CD4-positive, alpha-beta T cell (primary cell): ENCODE measurements at regions of chrX and their contacts with region 1.

Region 1: GRCh38 chrX:132219343-132219768 is at the start of gene RAP2C:
- DNase-seq: peak in 13 of 14 experiments; percentile 21 to 81 (median 42)
- ATAC-seq: no peak
- H3K4me3 ChIP-seq: peak within 1 kb of the TSS; percentile 85
- H3K4me3 Mint-ChIP-seq: peak within 1 kb of the TSS; percentile 93
- H3K27ac ChIP-seq: peak within 1 kb of the TSS; percentile 88 to 89
- H3K27ac Mint-ChIP-seq: peak within 1 kb of the TSS; percentile 100
- H3K4me1 ChIP-seq: peaks cover 8% of the 10 kb centered on the region
- H3K4me1 Mint-ChIP-seq: peaks cover 40% of the 10 kb centered on the region
- H3K27me3 ChIP-seq: no peaks in the 10 kb centered on the region
- H3K27me3 Mint-ChIP-seq: no peaks in the 10 kb centered on the region
- CTCF ChIP-seq: peak; percentile 54
- total RNA-seq, gene RAP2C: 51.9 to 52.0 TPM

Region 2: DNA sequence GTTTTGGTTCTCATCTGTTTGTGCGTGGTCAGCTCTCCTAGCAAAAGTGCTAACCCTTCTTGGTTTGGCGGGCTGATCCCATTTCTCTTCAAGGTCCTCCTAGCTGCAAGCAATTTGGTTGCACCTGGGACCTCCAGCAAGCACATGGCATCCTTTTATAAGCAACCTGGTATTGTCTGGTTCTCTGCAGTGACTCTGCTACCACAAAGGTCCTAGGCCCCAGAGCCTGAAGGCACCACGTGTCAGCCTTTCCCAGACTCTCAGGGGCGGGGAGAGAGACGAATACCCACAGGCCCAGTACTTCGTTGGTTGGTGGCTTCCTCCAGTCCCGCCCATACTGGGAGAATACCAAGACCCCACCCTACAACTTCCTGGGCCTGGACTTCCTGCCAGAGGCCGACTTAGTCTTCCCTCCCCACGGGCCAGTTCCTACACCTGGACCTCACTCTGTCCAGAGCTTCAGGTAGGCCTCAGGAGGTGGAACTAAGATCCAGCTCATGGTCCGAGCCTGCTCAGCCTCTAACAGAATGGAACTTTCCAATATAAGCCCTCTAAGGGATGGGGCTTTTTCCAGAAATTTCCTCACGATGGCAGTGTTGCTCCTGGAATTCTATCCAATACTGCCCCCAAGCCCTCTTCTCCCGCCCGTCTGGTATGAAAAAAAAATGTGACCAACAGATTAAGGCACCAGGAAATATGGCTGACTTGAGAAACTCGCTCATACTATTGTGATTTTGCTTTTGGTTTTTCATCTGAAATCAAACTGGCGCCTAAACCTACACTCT is 388.8 kb before region 1 on chrX:
- CTCF ChIA-PET with region 1: no interaction called
- POLR2A ChIA-PET with region 1: no interaction called
- intact Hi-C with region 1: loop called in 1 of 2 experiments (anchors 5 kb)
- DNase-seq: peak in 10 of 14 experiments; percentile 8 to 80 (median 36)
- ATAC-seq: peak; percentile 62
- H3K4me3 ChIP-seq: peak overlapping the region; percentile 37
- H3K4me3 Mint-ChIP-seq: peak overlapping the region; percentile 82
- H3K27ac ChIP-seq: peak overlapping the region in 1 of 2 donors; percentile 58
- H3K27ac Mint-ChIP-seq: peak overlapping the region; percentile 86
- H3K4me1 ChIP-seq: peaks cover 19% of the 10 kb centered on the region
- H3K4me1 Mint-ChIP-seq: peaks cover 33% of the 10 kb centered on the region
- H3K27me3 ChIP-seq: no peaks in the 10 kb centered on the region
- H3K27me3 Mint-ChIP-seq: no peaks in the 10 kb centered on the region
- CTCF ChIP-seq: no peak

Region 3: GRCh38 chrX:131854581-131854980 is 364.8 kb before region 1 on chrX:
- CTCF ChIA-PET with region 1: interaction called, 6 read pairs
- POLR2A ChIA-PET with region 1: no interaction called
- intact Hi-C with region 1: loop called in 1 of 2 experiments (anchors 2 kb)
- DNase-seq: peak in 3 of 14 experiments; percentile 28 to 47 (median 44)
- ATAC-seq: no peak
- H3K4me3 ChIP-seq: no peak overlapping the region
- H3K4me3 Mint-ChIP-seq: no peak overlapping the region
- H3K27ac ChIP-seq: no peak overlapping the region
- H3K27ac Mint-ChIP-seq: no peak overlapping the region
- H3K4me1 ChIP-seq: no peaks in the 10 kb centered on the region
- H3K4me1 Mint-ChIP-seq: no peaks in the 10 kb centered on the region
- H3K27me3 ChIP-seq: no peaks in the 10 kb centered on the region
- H3K27me3 Mint-ChIP-seq: no peaks in the 10 kb centered on the region
- CTCF ChIP-seq: peak; percentile 55

Region 4: GRCh38 chrX:131885558-131885957 is 333.8 kb before region 1 on chrX:
- CTCF ChIA-PET with region 1: no interaction called
- POLR2A ChIA-PET with region 1: no interaction called
- intact Hi-C with region 1: no loop called
- DNase-seq: no peak
- ATAC-seq: no peak
- H3K4me3 ChIP-seq: no peak overlapping the region
- H3K4me3 Mint-ChIP-seq: no peak overlapping the region
- H3K27ac ChIP-seq: no peak overlapping the region
- H3K27ac Mint-ChIP-seq: no peak overlapping the region
- H3K4me1 ChIP-seq: no peaks in the 10 kb centered on the region
- H3K4me1 Mint-ChIP-seq: no peaks in the 10 kb centered on the region
- H3K27me3 ChIP-seq: no peaks in the 10 kb centered on the region
- H3K27me3 Mint-ChIP-seq: no peaks in the 10 kb centered on the region
- CTCF ChIP-seq: no peak

Region 5: GRCh38 chrX:132092439-132093065 is 126.8 kb before region 1 on chrX:
- CTCF ChIA-PET with region 1: interaction called, 16 read pairs
- POLR2A ChIA-PET with region 1: interaction called, 12 read pairs
- intact Hi-C with region 1: loop called (anchors 1 to 2 kb)
- DNase-seq: peak; percentile 7 to 74 (median 30)
- ATAC-seq: peak; percentile 79
- H3K4me3 ChIP-seq: no peak overlapping the region
- H3K4me3 Mint-ChIP-seq: no peak overlapping the region
- H3K27ac ChIP-seq: no peak overlapping the region
- H3K27ac Mint-ChIP-seq: no peak overlapping the region
- H3K4me1 ChIP-seq: no peaks in the 10 kb centered on the region
- H3K4me1 Mint-ChIP-seq: no peaks in the 10 kb centered on the region
- H3K27me3 ChIP-seq: no peaks in the 10 kb centered on the region
- H3K27me3 Mint-ChIP-seq: no peaks in the 10 kb centered on the region
- CTCF ChIP-seq: peak; percentile 70

Region 6: GRCh38 chrX:132206259-132206658 is 13.1 kb before region 1 on chrX:
- CTCF ChIA-PET with region 1: interaction called, 11 read pairs
- POLR2A ChIA-PET with region 1: interaction called, 7 read pairs
- intact Hi-C with region 1: no loop called
- DNase-seq: no peak
- ATAC-seq: no peak
- H3K4me3 ChIP-seq: no peak overlapping the region
- H3K4me3 Mint-ChIP-seq: peak overlapping the region; percentile 46
- H3K27ac ChIP-seq: no peak overlapping the region
- H3K27ac Mint-ChIP-seq: no peak overlapping the region
- H3K4me1 ChIP-seq: peaks cover 6% of the 10 kb centered on the region
- H3K4me1 Mint-ChIP-seq: peaks cover 39% of the 10 kb centered on the region
- H3K27me3 ChIP-seq: no peaks in the 10 kb centered on the region
- H3K27me3 Mint-ChIP-seq: no peaks in the 10 kb centered on the region
- CTCF ChIP-seq: no peak

Region 7: GRCh38 chrX:132257116-132257515 is 37.8 kb after region 1 on chrX:
- CTCF ChIA-PET with region 1: no interaction called
- POLR2A ChIA-PET with region 1: no interaction called
- intact Hi-C with region 1: no loop called
- DNase-seq: no peak
- ATAC-seq: no peak
- H3K4me3 ChIP-seq: no peak overlapping the region
- H3K4me3 Mint-ChIP-seq: no peak overlapping the region
- H3K27ac ChIP-seq: no peak overlapping the region
- H3K27ac Mint-ChIP-seq: no peak overlapping the region
- H3K4me1 ChIP-seq: no peaks in the 10 kb centered on the region
- H3K4me1 Mint-ChIP-seq: no peaks in the 10 kb centered on the region
- H3K27me3 ChIP-seq: no peaks in the 10 kb centered on the region
- H3K27me3 Mint-ChIP-seq: no peaks in the 10 kb centered on the region
- CTCF ChIP-seq: no peak

Region 8: DNA sequence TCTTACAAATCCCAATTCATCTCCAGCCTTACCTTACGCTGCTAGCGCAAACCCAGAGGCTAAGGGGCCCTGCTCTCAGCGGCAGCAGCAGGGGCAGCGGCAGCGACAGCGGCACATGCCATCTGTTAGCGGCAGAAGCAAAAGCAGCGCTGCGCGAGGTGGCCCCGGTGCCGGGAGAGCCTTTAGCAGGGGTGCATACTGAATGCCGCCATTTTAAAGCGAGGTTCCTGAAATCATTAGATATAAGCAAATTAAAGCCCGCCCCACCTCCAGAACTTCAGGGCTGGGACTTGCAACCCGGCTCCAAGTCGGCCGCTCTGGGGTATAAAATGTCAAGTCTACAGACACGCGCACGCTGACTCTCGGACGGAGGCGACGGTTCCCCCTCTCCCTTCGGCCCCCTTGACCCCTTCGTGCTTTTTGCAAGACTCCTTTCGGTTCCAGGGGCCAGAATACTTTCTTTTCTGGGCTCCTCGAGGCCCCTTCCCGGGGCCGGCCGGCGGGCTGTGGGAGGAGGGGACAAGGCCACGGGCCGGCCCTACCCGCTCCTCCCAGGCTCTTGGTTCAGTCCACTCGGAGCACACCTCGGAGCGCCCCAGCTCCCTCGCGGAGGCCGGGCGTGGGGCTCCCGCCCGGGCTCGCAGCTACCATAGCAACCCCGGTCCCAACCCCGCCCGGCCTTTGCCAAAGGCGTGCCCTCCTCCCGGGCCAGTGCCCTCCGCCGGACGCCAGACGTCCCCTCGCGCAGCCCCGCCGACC is 269.6 kb after region 1 on chrX and contains the start of gene MBNL3:
- CTCF ChIA-PET with region 1: interaction called, 3 read pairs
- POLR2A ChIA-PET with region 1: interaction called, 4 read pairs
- intact Hi-C with region 1: loop called (anchors 5 kb)
- DNase-seq: peak; percentile 54 to 87 (median 67)
- ATAC-seq: peak; percentile 75
- H3K4me3 ChIP-seq: peak within 1 kb of the TSS; percentile 80
- H3K4me3 Mint-ChIP-seq: peak within 1 kb of the TSS; percentile 99
- H3K27ac ChIP-seq: peak within 1 kb of the TSS; percentile 75 to 80
- H3K27ac Mint-ChIP-seq: peak within 1 kb of the TSS; percentile 98
- H3K4me1 ChIP-seq: peaks cover 18% of the 10 kb centered on the region
- H3K4me1 Mint-ChIP-seq: peaks cover 61% of the 10 kb centered on the region
- H3K27me3 ChIP-seq: no peaks in the 10 kb centered on the region
- H3K27me3 Mint-ChIP-seq: no peaks in the 10 kb centered on the region
- CTCF ChIP-seq: no peak
- total RNA-seq, gene MBNL3: 19.0 to 19.4 TPM